ENCODE measurements at regions of chr2 and their contacts with region 1.

Region 1: DNA sequence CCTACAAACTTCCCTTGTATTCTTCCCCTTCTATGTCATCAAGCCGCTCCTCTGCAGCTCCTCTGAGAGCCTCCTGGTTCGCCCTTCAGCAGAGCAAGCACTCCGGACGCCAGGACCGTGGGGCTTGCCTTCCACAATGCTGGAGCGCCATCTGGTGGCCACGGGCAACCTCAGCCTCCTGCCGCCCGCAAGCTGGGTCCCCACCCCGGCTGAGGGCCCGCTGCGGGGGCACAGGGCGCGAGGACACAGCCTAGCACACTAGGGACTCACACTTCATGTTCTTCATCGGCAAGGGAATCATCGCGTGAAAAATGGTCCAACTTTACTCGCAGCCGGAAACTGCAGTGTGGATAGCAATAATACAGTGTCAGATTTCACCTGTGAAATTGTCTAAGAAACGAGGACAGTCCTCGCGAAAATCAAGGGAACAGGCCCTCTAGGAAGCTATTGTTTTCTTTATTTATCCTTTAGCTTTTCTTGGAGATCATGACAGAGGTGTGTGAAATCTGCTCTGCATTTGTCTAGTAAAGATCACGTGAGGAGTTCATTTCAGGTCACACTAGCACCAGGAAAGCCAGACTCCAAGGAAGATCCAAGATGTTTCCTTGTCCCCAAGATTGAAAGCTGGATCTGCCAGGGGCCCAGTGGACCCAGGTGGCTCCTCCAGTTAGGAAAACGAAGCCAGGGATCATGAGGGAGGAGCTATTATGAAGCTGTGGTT is 5.8 kb downstream of the PRLH start:
- DNase-seq: peak; percentile 92

Region 2: GRCh38 chr2:237122214-237122666 is 449.9 kb before region 1 on chr2:
- intact Hi-C with region 1: loop called (anchors 2 kb)
- DNase-seq: no peak

Region 3: GRCh38 chr2:237421542-237422116 is 150.6 kb before region 1 on chr2:
- intact Hi-C with region 1: loop called (anchors 5 kb)
- DNase-seq: peak; percentile 83

Region 4: GRCh38 chr2:237512774-237513466 is 59.3 kb before region 1 on chr2:
- intact Hi-C with region 1: loop called (anchors 1 kb)
- DNase-seq: peak; percentile 92

Region 5: GRCh38 chr2:237639836-237640220 is 67.6 kb after region 1 on chr2:
- intact Hi-C with region 1: no loop called
- DNase-seq: no peak